Upper lobe of right lung (tissue), 1 donor: ENCODE measurements at regions of chr9 and their contacts with region 1.

Region 1: DNA sequence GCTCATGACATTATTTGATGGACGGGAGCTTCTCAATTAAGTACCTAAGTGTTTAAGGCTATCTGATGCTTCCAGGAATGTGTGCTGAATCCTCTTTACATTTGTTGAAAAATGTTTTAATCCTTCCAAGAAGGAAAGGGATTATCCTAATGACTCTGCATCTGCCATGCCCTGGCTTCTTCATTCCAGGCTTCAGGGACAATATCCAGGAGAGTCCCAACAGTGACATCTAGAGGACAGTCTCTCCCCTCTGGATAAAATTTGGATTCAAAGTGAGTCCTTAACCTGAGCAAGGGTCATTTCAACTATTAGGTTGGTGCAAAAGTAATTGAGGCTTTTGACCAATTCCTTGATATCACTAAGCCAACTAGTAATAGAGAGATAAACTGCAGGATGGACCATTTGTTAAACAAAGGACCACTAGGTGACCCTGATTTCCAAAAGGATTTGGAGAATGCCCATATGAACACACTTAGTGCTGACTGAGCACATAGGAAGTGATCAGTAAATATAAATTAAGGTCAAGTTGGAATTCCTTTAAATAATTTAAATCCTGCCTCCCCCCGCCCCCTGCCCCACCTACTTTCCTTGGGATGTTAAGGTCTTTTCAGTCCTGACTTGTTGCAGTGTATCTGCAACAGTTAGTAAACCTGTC is 19.1 kb downstream of the TNFSF8 start:
- DNase-seq: no peak
- ATAC-seq: peak; percentile 81
- H3K4me3 ChIP-seq: no peak overlapping the region
- H3K27ac ChIP-seq: no peak overlapping the region
- H3K4me1 ChIP-seq: peaks cover 23% of the 10 kb centered on the region
- H3K27me3 ChIP-seq: no peaks in the 10 kb centered on the region
- CTCF ChIP-seq: peak; percentile 79

Region 2: DNA sequence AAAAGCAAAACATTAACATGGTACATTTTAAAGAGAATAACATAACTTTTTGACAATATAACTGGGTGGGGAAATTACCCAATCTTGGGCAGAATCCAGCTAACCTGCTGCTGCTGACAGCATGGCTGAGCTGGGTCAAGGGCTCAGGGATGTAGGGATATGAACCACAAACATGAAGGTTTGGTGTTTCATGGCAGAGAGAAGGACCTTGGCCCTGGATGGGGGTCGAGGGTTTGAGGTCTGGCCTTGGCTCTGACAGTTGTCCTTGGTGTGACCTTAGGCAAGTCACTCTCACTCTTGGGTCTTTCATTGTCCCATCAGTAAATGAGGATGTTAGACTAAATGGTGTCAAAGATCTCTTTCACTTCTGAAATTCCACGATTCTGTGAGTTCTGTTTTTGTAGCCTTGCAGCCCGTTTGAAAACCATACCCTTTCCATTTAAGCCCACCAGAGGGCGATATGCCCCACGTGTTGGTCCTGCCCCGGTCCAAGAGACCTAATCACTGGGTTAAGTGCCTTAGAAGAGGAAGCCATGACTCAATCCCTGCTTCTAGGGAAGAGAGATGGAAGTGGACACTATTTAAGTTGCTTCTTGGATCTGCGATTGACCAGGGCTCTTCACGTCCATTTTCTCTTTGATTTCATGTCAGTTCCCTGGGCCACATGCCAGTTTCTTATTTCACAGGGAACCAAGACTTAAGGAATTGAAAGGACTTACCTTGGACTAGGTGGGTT is 172.5 kb before region 1 on chr9:
- intact Hi-C with region 1: loop called (anchors 10 kb)
- DNase-seq: peak; percentile 72
- ATAC-seq: peak; percentile 100
- H3K4me3 ChIP-seq: no peak overlapping the region
- H3K27ac ChIP-seq: no peak overlapping the region
- H3K4me1 ChIP-seq: no peaks in the 10 kb centered on the region
- H3K27me3 ChIP-seq: no peaks in the 10 kb centered on the region
- CTCF ChIP-seq: peak; percentile 86